Activated CD8-positive, alpha-beta T cell treated with anti-CD3 and anti-CD28 coated beads for 36 hours (primary cell): ENCODE measurements at regions of chr7 and their contacts with region 1.

Region 1: GRCh38 chr7:99392677-99393354 is 15.6 kb downstream of the PDAP1 start:
- DNase-seq: peak; percentile 91
- ATAC-seq: peak; percentile 94
- H3K4me3 Mint-ChIP-seq: peak overlapping the region; percentile 58
- H3K27ac Mint-ChIP-seq: peak overlapping the region; percentile 87
- H3K4me1 Mint-ChIP-seq: peaks cover 20% of the 10 kb centered on the region
- H3K27me3 Mint-ChIP-seq: no peaks in the 10 kb centered on the region
- CTCF ChIP-seq: no peak

Region 2: DNA sequence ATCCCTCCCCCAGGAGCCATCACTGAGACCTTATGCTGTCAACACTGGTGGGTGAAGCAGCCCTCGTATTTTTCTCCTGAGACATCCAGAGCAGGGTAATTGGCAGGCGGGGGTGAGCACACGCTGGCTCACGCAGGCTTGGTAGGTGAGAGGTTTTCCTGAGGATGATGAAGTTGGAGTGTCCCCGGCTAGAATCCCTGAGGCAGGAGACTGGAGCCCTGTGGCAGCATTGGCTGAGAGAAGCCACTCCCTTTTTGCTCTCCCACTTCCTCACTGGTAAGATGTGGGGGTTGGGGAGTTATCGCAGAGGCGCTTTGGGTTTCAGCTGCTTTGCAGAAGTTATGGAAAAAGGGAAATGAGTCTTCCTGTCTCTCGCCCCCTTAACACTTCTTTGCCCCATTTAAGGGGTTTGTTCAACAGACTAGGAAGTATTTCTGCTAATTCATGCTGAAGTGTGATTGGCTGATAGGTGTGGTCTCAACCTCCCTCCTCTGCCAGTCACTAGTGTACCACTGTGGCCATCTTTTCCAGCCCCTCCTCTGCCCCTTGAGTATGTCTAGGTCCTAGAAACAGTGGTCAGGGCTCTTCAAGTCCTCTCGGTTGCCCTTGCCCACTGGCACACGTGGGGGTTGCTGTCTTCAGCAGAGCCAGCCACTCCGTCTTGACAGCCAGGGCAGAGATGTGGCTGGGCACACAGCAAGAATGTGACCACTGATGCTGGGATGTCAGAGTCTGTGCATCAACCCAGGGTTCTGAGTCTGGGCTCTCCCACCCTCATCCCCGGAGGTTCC is 12.6 kb before region 1 on chr7:
- CTCF ChIA-PET with region 1: interaction called, 4 read pairs
- POLR2A ChIA-PET with region 1: interaction called, 15 read pairs
- intact Hi-C with region 1: no loop called
- DNase-seq: peak; percentile 58
- ATAC-seq: peak; percentile 32
- H3K4me3 Mint-ChIP-seq: peak overlapping the region; percentile 75
- H3K27ac Mint-ChIP-seq: peak overlapping the region; percentile 93
- H3K4me1 Mint-ChIP-seq: peaks cover 56% of the 10 kb centered on the region
- H3K27me3 Mint-ChIP-seq: no peaks in the 10 kb centered on the region
- CTCF ChIP-seq: no peak